Adrenal gland (tissue), 19 donors: ENCODE measurements at regions of chrX and their contacts with region 1.

Region 1: GRCh38 chrX:10119399-10119990 is 37.3 kb upstream of the CLCN4 start:
- DNase-seq: peak; percentile 72 to 91 (median 83)
- H3K4me3 ChIP-seq: no peak overlapping the region
- H3K27ac ChIP-seq: peak overlapping the region in 1 of 5 donors; percentile 22
- H3K4me1 ChIP-seq: peaks cover 0 to 5% of the 10 kb centered on the region in 2 donors
- H3K27me3 ChIP-seq: no peaks in the 10 kb centered on the region
- CTCF ChIP-seq: peak; percentile 100
- POLR2A ChIP-seq: peak in 1 of 2 donors; percentile 40

Region 2: DNA sequence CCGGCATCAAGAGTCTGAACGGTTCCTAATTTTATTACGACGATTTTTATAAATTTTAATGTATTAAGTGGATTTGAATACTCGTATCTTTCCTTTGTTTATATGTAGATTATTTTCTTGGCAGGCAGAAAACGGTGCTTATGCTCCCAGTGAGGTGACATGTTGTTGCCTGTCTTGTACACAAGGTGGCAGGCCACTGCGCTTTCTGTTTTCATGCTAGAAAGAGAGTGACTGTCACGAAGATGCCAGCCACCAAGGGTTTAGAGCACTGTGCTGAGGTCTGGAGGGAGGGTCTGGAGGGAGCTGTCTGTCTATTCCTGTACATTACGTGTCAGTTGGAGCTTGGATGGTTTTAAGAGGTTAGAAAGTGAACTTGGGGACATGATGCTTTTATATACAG is 245.5 kb before region 1 on chrX:
- intact Hi-C with region 1: loop called in 1 of 2 experiments (anchors 10 kb)
- DNase-seq: peak; percentile 42 to 76 (median 64)
- H3K4me3 ChIP-seq: no peak overlapping the region
- H3K27ac ChIP-seq: no peak overlapping the region
- H3K4me1 ChIP-seq: no peaks in the 10 kb centered on the region
- H3K27me3 ChIP-seq: no peaks in the 10 kb centered on the region
- CTCF ChIP-seq: peak; percentile 34 to 63 (median 55)
- POLR2A ChIP-seq: no peak

Region 3: GRCh38 chrX:9885150-9885549 is 234.3 kb before region 1 on chrX:
- intact Hi-C with region 1: loop called in 1 of 2 experiments (anchors 10 kb)
- DNase-seq: peak; percentile 61 to 84 (median 73)
- H3K4me3 ChIP-seq: no peak overlapping the region
- H3K27ac ChIP-seq: no peak overlapping the region
- H3K4me1 ChIP-seq: peaks cover 3 to 14% of the 10 kb centered on the region in 2 donors
- H3K27me3 ChIP-seq: no peaks in the 10 kb centered on the region
- CTCF ChIP-seq: peak; percentile 29 to 57 (median 46)
- POLR2A ChIP-seq: no peak

Region 4: GRCh38 chrX:9995855-9996339 is 123.6 kb before region 1 on chrX:
- intact Hi-C with region 1: loop called (anchors 5 kb)
- DNase-seq: peak; percentile 80 to 94 (median 86)
- H3K4me3 ChIP-seq: no peak overlapping the region
- H3K27ac ChIP-seq: no peak overlapping the region
- H3K4me1 ChIP-seq: no peaks in the 10 kb centered on the region
- H3K27me3 ChIP-seq: peaks cover 2% of the 10 kb centered on the region
- CTCF ChIP-seq: peak; percentile 87 to 99 (median 98)
- POLR2A ChIP-seq: no peak